CD8-positive, alpha-beta T cell (primary cell): ENCODE measurements at regions of chr17 and their contacts with region 1.

Region 1: GRCh38 chr17:66301797-66302741 is at the start of gene PRKCA:
- DNase-seq: peak; percentile 44 to 88 (median 69)
- ATAC-seq: peak; percentile 73
- H3K4me3 ChIP-seq: peak within 1 kb of the TSS; percentile 67 to 78
- H3K4me3 Mint-ChIP-seq: peak within 1 kb of the TSS; percentile 99
- H3K27ac ChIP-seq: peak within 1 kb of the TSS; percentile 19 to 49
- H3K27ac Mint-ChIP-seq: peak within 1 kb of the TSS; percentile 95
- H3K4me1 ChIP-seq: peaks cover 25% of the 10 kb centered on the region
- H3K4me1 Mint-ChIP-seq: peaks cover 53% of the 10 kb centered on the region
- H3K27me3 ChIP-seq: no peaks in the 10 kb centered on the region
- H3K27me3 Mint-ChIP-seq: no peaks in the 10 kb centered on the region
- CTCF ChIP-seq: no peak
- total RNA-seq, gene PRKCA: 62.6 to 70.8 TPM

Region 2: GRCh38 chr17:66191593-66192382 is 110.3 kb before region 1 on chr17 and contains the start of gene CEP112:
- CTCF ChIA-PET with region 1: no interaction called
- POLR2A ChIA-PET with region 1: no interaction called
- intact Hi-C with region 1: loop called in 1 of 2 experiments (anchors 5 kb)
- DNase-seq: peak; percentile 84 to 99 (median 92)
- ATAC-seq: peak; percentile 86
- H3K4me3 ChIP-seq: peak within 1 kb of the TSS; percentile 58 to 76
- H3K4me3 Mint-ChIP-seq: peak within 1 kb of the TSS; percentile 84
- H3K27ac ChIP-seq: peak within 1 kb of the TSS; percentile 58 to 76
- H3K27ac Mint-ChIP-seq: peak within 1 kb of the TSS; percentile 83
- H3K4me1 ChIP-seq: peaks cover 14% of the 10 kb centered on the region
- H3K4me1 Mint-ChIP-seq: peaks cover 15% of the 10 kb centered on the region
- H3K27me3 ChIP-seq: no peaks in the 10 kb centered on the region
- H3K27me3 Mint-ChIP-seq: no peaks in the 10 kb centered on the region
- CTCF ChIP-seq: no peak
- total RNA-seq, gene CEP112: 0.28 to 1.5 TPM

Region 3: DNA sequence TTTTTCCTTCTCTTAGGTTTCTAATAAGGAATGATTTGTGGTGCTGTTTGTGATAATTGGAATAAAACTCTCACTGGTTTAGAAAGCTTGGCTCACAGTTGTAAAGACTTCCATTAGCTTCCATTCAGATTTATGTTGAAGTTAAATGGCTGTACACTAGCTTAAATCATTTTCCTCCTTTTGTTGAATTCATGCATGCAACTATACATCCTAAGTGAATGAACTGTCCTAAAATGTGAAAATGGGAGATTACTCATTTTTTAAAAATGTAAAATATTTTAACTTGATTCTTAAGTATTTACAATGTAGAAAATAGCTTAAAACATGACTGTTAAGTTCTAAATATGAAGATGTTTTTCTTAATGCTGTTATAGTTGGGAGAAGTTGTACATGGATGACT is 15.6 kb after region 1 on chr17:
- CTCF ChIA-PET with region 1: interaction called, 4 read pairs
- POLR2A ChIA-PET with region 1: interaction called, 3 read pairs
- intact Hi-C with region 1: loop called in 1 of 2 experiments (anchors 2 kb)
- DNase-seq: no peak
- ATAC-seq: no peak
- H3K4me3 ChIP-seq: no peak overlapping the region
- H3K4me3 Mint-ChIP-seq: no peak overlapping the region
- H3K27ac ChIP-seq: no peak overlapping the region
- H3K27ac Mint-ChIP-seq: no peak overlapping the region
- H3K4me1 ChIP-seq: peaks cover 25% of the 10 kb centered on the region
- H3K4me1 Mint-ChIP-seq: peaks cover 53% of the 10 kb centered on the region
- H3K27me3 ChIP-seq: no peaks in the 10 kb centered on the region
- H3K27me3 Mint-ChIP-seq: no peaks in the 10 kb centered on the region
- CTCF ChIP-seq: no peak

Region 4: GRCh38 chr17:66337866-66338485 is 35.9 kb after region 1 on chr17:
- CTCF ChIA-PET with region 1: no interaction called
- POLR2A ChIA-PET with region 1: no interaction called
- intact Hi-C with region 1: no loop called
- DNase-seq: no peak
- ATAC-seq: no peak
- H3K4me3 ChIP-seq: no peak overlapping the region
- H3K4me3 Mint-ChIP-seq: no peak overlapping the region
- H3K27ac ChIP-seq: no peak overlapping the region
- H3K27ac Mint-ChIP-seq: peak overlapping the region; percentile 52
- H3K4me1 ChIP-seq: peaks cover 72% of the 10 kb centered on the region
- H3K4me1 Mint-ChIP-seq: peaks cover 76% of the 10 kb centered on the region
- H3K27me3 ChIP-seq: no peaks in the 10 kb centered on the region
- H3K27me3 Mint-ChIP-seq: no peaks in the 10 kb centered on the region
- CTCF ChIP-seq: no peak

Region 5: GRCh38 chr17:66373944-66374817 is 72.1 kb after region 1 on chr17:
- CTCF ChIA-PET with region 1: no interaction called
- POLR2A ChIA-PET with region 1: no interaction called
- intact Hi-C with region 1: loop called in 1 of 2 experiments (anchors 2 kb)
- DNase-seq: peak; percentile 46 to 85 (median 73)
- ATAC-seq: peak; percentile 90
- H3K4me3 ChIP-seq: no peak overlapping the region
- H3K4me3 Mint-ChIP-seq: peak overlapping the region; percentile 51
- H3K27ac ChIP-seq: peak overlapping the region; percentile 19 to 41
- H3K27ac Mint-ChIP-seq: peak overlapping the region; percentile 91
- H3K4me1 ChIP-seq: peaks cover 31% of the 10 kb centered on the region
- H3K4me1 Mint-ChIP-seq: peaks cover 62% of the 10 kb centered on the region
- H3K27me3 ChIP-seq: no peaks in the 10 kb centered on the region
- H3K27me3 Mint-ChIP-seq: no peaks in the 10 kb centered on the region
- CTCF ChIP-seq: no peak

Region 6: GRCh38 chr17:66386498-66387365 is 84.7 kb after region 1 on chr17:
- CTCF ChIA-PET with region 1: no interaction called
- POLR2A ChIA-PET with region 1: no interaction called
- intact Hi-C with region 1: no loop called
- DNase-seq: no peak
- ATAC-seq: no peak
- H3K4me3 ChIP-seq: no peak overlapping the region
- H3K4me3 Mint-ChIP-seq: no peak overlapping the region
- H3K27ac ChIP-seq: no peak overlapping the region
- H3K27ac Mint-ChIP-seq: peak overlapping the region; percentile 67
- H3K4me1 ChIP-seq: peaks cover 27% of the 10 kb centered on the region
- H3K4me1 Mint-ChIP-seq: peaks cover 67% of the 10 kb centered on the region
- H3K27me3 ChIP-seq: no peaks in the 10 kb centered on the region
- H3K27me3 Mint-ChIP-seq: no peaks in the 10 kb centered on the region
- CTCF ChIP-seq: no peak

Region 7: GRCh38 chr17:66426397-66427033 is 124.4 kb after region 1 on chr17:
- CTCF ChIA-PET with region 1: interaction called, 5 read pairs
- POLR2A ChIA-PET with region 1: no interaction called
- intact Hi-C with region 1: loop called (anchors 1 kb)
- DNase-seq: peak; percentile 14 to 81 (median 49)
- ATAC-seq: peak; percentile 98
- H3K4me3 ChIP-seq: no peak overlapping the region
- H3K4me3 Mint-ChIP-seq: peak overlapping the region; percentile 48
- H3K27ac ChIP-seq: no peak overlapping the region
- H3K27ac Mint-ChIP-seq: peak overlapping the region; percentile 82
- H3K4me1 ChIP-seq: peaks cover 19% of the 10 kb centered on the region
- H3K4me1 Mint-ChIP-seq: peaks cover 64% of the 10 kb centered on the region
- H3K27me3 ChIP-seq: no peaks in the 10 kb centered on the region
- H3K27me3 Mint-ChIP-seq: no peaks in the 10 kb centered on the region
- CTCF ChIP-seq: peak; percentile 48